CD14-positive monocyte (primary cell): ENCODE measurements at regions of chr7 and their contacts with region 1.

Region 1: DNA sequence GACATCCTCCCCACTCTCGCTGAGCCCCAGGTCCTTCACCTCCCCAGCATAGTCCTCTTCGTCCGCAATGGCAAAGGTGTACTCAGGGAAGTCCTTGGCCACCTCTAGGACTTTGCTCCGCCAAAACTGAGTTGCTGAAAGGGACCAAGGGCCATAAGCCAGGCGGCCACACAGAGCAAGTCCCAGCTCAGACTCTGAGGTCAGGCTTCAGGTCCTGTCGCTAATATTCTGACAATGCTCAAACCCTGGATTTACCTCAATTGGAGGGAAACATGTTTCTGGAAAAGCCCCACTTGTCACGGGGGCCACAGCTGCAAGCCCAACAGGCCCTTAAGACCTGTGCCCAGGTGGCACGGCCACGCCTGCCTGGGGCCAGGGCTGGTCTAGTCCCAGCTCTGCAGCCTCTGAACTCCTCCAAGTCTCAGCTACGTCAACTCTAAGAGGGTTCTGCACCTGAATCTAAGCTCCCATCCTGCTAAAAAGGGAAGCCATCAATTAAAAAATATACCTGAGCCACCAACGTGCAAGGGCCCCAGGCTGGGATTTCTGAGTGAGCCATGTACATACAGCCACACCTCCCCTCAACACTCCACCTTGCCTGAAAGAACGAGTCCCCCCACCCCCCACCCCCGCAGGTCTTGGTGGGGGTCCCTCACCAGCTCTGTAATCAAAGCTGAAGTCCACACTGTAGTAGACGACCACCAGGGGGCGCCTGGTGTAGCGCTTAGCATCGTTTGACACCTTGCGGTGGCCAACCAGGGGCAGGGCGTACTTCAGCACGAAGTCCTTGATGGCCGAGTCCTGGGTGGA is 22.9 kb downstream of the PDIA4 start:
- DNase-seq: peak; percentile 67 to 85 (median 80)
- H3K4me3 ChIP-seq: no peak overlapping the region
- H3K4me3 Mint-ChIP-seq: no peak overlapping the region
- H3K27ac ChIP-seq: peak overlapping the region in 1 of 2 donors; percentile 6
- H3K27ac Mint-ChIP-seq: peak overlapping the region in 4 of 7 donors; percentile 15 to 68 (median 42)
- H3K4me1 ChIP-seq: no peaks in the 10 kb centered on the region
- H3K4me1 Mint-ChIP-seq: peaks cover 2% of the 10 kb centered on the region
- H3K27me3 ChIP-seq: no peaks in the 10 kb centered on the region
- H3K27me3 Mint-ChIP-seq: peaks cover 0 to 3% (median 0%) of the 10 kb centered on the region in 3 donors
- CTCF ChIP-seq: peak; percentile 94

Region 2: GRCh38 chr7:149090397-149091195 is 85.2 kb after region 1 on chr7 and contains the start of gene ZNF786:
- intact Hi-C with region 1: loop called (anchors 2 kb)
- DNase-seq: peak; percentile 80 to 83 (median 82)
- H3K4me3 ChIP-seq: peak within 1 kb of the TSS; percentile 69 to 89 (median 77)
- H3K4me3 Mint-ChIP-seq: peak within 1 kb of the TSS; percentile 99 to 100
- H3K27ac ChIP-seq: peak within 1 kb of the TSS; percentile 89
- H3K27ac Mint-ChIP-seq: peak within 1 kb of the TSS; percentile 85 to 99 (median 98)
- H3K4me1 ChIP-seq: peaks cover 47 to 60% of the 10 kb centered on the region in 2 donors
- H3K4me1 Mint-ChIP-seq: peaks cover 44% of the 10 kb centered on the region
- H3K27me3 ChIP-seq: no peaks in the 10 kb centered on the region
- H3K27me3 Mint-ChIP-seq: no peaks in the 10 kb centered on the region
- CTCF ChIP-seq: peak; percentile 92
- polyA plus RNA-seq, gene ZNF786: 0.84 to 2.6 (median 1.2) TPM